ENCODE measurements at regions of chr6 and their contacts with region 1.

Region 1: GRCh38 chr6:107674995-107675738 is 148.9 kb downstream of the SCML4 start:
- DNase-seq: no peak
- H3K4me3 ChIP-seq: peak overlapping the region in 1 of 4 donors; percentile 10
- H3K27ac ChIP-seq: no peak overlapping the region
- H3K4me1 ChIP-seq: peaks cover 14 to 18% (median 17%) of the 10 kb centered on the region in 4 donors
- H3K27me3 ChIP-seq: no peaks in the 10 kb centered on the region
- CTCF ChIP-seq: peak; percentile 70 to 90 (median 81)
- EP300 ChIP-seq: no peak
- POLR2A ChIP-seq: no peak

Region 2: GRCh38 chr6:107386340-107386739 is 288.8 kb before region 1 on chr6:
- intact Hi-C with region 1: no loop called
- DNase-seq: no peak
- H3K4me3 ChIP-seq: no peak overlapping the region
- H3K27ac ChIP-seq: no peak overlapping the region
- H3K4me1 ChIP-seq: no peaks in the 10 kb centered on the region
- H3K27me3 ChIP-seq: no peaks in the 10 kb centered on the region
- CTCF ChIP-seq: no peak
- EP300 ChIP-seq: no peak
- POLR2A ChIP-seq: no peak

Region 3: GRCh38 chr6:107847844-107848802 is 173.0 kb after region 1 on chr6:
- intact Hi-C with region 1: loop called (anchors 2 kb)
- DNase-seq: peak; percentile 95
- H3K4me3 ChIP-seq: peak overlapping the region; percentile 48 to 65 (median 54)
- H3K27ac ChIP-seq: no peak overlapping the region
- H3K4me1 ChIP-seq: peaks cover 8 to 14% (median 12%) of the 10 kb centered on the region in 4 donors
- H3K27me3 ChIP-seq: peaks cover 0 to 23% (median 0%) of the 10 kb centered on the region in 4 donors
- CTCF ChIP-seq: peak; percentile 88 to 100 (median 94)
- EP300 ChIP-seq: no peak
- POLR2A ChIP-seq: no peak

Measured in esophagus muscularis mucosa (tissue), 4 donors.